ENCODE measurements at regions of chr12 and their contacts with region 1.

Region 1: GRCh38 chr12:8890313-8891085 is 23.8 kb upstream of the PHC1 start:
- DNase-seq: no peak
- H3K4me3 ChIP-seq: peak overlapping the region; percentile 47
- H3K27me3 ChIP-seq: no peaks in the 10 kb centered on the region
- CTCF ChIP-seq: peak; percentile 86

Region 2: GRCh38 chr12:8681041-8681902 is 209.2 kb before region 1 on chr12:
- CTCF ChIA-PET with region 1: interaction called, 43 read pairs
- POLR2A ChIA-PET with region 1: no interaction called
- DNase-seq: no peak
- H3K4me3 ChIP-seq: no peak overlapping the region
- H3K27me3 ChIP-seq: no peaks in the 10 kb centered on the region
- CTCF ChIP-seq: no peak

Region 3: DNA sequence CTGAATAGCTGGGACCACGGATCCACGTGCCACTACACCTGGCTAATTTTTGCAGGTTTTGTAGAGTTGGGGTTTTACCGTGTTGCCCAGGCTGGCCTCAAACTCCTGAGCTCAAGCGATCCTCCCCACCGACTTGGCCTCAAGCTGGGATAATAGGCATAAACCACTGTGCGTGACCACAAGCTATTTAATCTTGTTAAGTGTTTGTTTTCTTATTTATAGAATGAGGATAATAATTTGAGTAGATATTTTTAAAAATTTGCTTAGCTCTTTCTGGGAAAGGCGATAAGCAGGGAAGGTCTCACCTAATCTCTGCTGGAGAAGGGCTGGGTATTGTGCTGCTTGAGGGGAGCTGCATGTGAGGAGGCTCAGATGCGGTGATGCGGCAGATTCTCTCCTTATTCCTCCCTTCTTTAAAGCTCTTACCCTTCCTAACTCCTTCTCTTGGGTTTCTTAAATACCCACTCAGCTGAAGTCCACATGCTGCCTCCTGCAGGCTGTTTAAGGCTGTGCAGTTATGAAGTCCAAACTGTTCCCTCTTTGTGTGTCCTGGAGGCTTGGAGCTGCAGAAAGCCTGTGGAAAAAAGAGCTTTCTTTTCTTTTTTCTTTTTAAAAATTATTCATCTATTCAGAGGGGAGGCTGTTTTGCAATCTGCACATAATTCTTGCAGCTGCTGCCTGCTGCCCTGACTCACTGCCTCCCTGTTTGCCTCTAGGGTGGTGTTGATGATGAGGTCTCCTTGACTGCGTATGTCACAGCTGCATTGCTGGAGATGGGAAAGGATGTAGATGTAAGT is 30.1 kb before region 1 on chr12:
- CTCF ChIA-PET with region 1: interaction called, 32 read pairs
- POLR2A ChIA-PET with region 1: no interaction called
- DNase-seq: no peak
- H3K4me3 ChIP-seq: no peak overlapping the region
- H3K27me3 ChIP-seq: no peaks in the 10 kb centered on the region
- CTCF ChIP-seq: peak; percentile 70

Region 4: DNA sequence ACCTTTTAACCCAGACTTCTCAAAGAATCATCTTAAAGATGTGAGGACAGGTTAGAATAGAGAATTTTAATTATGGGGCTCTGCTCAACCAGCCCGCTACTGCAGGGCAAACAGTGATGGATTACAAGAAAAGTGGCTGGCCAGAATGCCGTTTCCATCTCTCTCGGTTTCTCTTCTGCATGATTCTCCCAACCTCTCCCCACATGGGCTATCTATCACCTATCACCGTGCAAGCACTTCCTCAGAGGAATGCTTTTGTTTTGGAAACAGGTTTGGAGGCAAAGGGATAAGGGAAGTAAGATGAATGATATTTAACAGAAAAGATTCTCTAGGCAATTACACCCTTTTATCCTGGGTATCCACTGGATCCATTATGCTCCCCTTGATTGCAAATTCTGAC is 13.6 kb before region 1 on chr12:
- CTCF ChIA-PET with region 1: interaction called, 20 read pairs
- POLR2A ChIA-PET with region 1: no interaction called
- DNase-seq: no peak
- H3K4me3 ChIP-seq: no peak overlapping the region
- H3K27me3 ChIP-seq: no peaks in the 10 kb centered on the region
- CTCF ChIP-seq: no peak

Region 5: GRCh38 chr12:8969861-8970412 is 79.4 kb after region 1 on chr12:
- CTCF ChIA-PET with region 1: no interaction called
- POLR2A ChIA-PET with region 1: no interaction called
- DNase-seq: no peak
- H3K4me3 ChIP-seq: no peak overlapping the region
- H3K27me3 ChIP-seq: no peaks in the 10 kb centered on the region
- CTCF ChIP-seq: no peak

Region 6: GRCh38 chr12:9027161-9028059 is 136.9 kb after region 1 on chr12:
- CTCF ChIA-PET with region 1: no interaction called
- POLR2A ChIA-PET with region 1: no interaction called
- DNase-seq: no peak
- H3K4me3 ChIP-seq: no peak overlapping the region
- H3K27me3 ChIP-seq: no peaks in the 10 kb centered on the region
- CTCF ChIP-seq: no peak

Measured in BJ (cell line).